Activated CD8-positive, alpha-beta T cell treated with anti-CD3 and anti-CD28 coated beads for 36 hours (primary cell): ENCODE measurements at regions of chr2 and their contacts with region 1.

Region 1: DNA sequence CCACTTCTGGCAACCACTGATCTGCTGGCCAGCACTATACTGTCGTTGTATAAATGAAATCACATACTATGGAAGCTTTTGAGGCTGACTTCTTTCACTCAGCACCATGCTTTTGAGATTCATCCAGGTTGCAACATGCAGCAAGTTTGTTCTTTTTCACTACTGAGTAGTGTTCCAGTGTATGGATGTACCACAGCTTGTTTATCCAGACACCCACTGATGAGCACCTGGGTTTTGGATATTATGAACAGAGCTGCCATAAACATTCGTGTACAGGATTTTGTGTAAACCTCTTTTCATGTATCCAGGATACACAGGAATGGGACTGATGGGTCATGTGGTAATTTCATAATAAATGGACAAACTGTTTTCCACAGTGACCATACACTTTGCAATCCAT is 10.7 kb downstream of the ERCC3 start:
- DNase-seq: no peak
- ATAC-seq: no peak
- H3K4me3 Mint-ChIP-seq: no peak overlapping the region
- H3K27ac Mint-ChIP-seq: no peak overlapping the region
- H3K4me1 Mint-ChIP-seq: peaks cover 27% of the 10 kb centered on the region
- H3K27me3 Mint-ChIP-seq: no peaks in the 10 kb centered on the region
- CTCF ChIP-seq: no peak

Region 2: DNA sequence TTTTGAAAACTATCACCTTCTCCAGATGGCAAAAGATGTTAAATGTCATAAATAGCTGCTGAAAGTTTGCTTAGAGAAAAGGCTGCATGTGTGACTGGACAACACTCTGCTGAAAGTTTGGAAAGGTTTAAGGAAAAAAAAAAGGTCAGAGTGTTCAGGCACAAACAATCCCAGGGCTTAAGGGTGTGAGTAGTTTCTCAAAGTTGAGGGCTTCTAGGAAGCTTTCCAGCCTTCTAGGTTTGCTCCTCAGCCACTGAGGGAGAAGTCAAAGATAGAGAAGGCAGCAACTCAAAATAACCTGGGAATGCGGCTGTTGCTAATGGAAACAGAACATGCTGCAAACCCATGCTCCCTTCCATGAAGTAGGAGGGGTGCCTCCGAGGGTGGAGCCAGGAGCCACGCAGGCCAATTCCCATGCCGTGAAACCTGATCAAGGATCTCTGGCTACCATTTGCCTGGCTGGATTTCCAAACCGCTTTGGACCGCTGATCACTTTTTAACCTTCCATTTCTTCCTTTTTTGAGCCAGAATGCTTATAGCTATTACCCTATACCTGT is 296.6 kb before region 1 on chr2:
- CTCF ChIA-PET with region 1: no interaction called
- POLR2A ChIA-PET with region 1: no interaction called
- intact Hi-C with region 1: no loop called
- DNase-seq: no peak
- ATAC-seq: no peak
- H3K4me3 Mint-ChIP-seq: no peak overlapping the region
- H3K27ac Mint-ChIP-seq: no peak overlapping the region
- H3K4me1 Mint-ChIP-seq: no peaks in the 10 kb centered on the region
- H3K27me3 Mint-ChIP-seq: peaks cover 14% of the 10 kb centered on the region
- CTCF ChIP-seq: no peak

Region 3: GRCh38 chr2:127086990-127087790 is 196.1 kb before region 1 on chr2:
- CTCF ChIA-PET with region 1: no interaction called
- POLR2A ChIA-PET with region 1: no interaction called
- intact Hi-C with region 1: no loop called
- DNase-seq: no peak
- ATAC-seq: no peak
- H3K4me3 Mint-ChIP-seq: no peak overlapping the region
- H3K27ac Mint-ChIP-seq: peak overlapping the region; percentile 32
- H3K4me1 Mint-ChIP-seq: peaks cover 45% of the 10 kb centered on the region
- H3K27me3 Mint-ChIP-seq: no peaks in the 10 kb centered on the region
- CTCF ChIP-seq: no peak

Region 4: DNA sequence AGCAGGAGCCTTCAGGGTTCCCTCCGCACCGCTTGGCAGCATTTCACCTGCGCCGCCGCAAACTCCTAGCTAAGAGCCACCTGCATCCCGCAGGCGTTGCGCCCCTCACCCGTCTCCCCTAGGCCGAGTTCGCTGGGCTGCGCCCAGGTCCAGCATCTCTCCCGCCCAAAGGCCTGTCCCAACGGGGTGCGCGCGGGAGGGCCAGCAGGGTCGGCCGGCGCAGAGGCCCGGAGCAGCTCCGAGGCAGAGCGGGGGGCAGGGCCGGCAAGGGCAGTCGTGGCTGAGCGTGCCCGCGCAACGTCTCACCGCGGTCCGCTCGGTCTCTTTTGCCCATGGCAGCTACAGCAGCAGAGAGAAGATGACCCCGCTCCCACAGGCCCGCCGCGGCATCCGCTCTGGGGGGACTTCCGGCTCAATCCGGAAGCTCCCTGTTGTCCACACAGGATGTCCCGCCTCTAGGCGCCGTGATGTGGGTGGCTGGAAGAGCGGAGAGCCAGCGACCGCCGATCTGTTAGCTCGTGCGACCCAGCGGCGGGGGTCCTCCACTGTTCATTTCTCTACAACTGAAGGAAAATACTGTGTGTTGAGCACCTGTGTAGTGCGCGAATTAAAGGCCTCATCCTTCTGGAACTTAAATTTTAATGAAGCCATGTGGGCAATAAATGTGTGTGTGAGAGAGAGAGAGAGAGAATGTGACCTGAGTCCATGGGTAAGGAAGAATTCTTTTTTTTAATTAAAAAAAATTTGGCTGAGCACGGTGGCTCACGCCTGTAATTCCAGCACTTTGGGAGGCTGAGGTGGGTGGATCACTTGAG is 10.7 kb after region 1 on chr2 and contains the start of gene ERCC3:
- CTCF ChIA-PET with region 1: interaction called, 4 read pairs
- POLR2A ChIA-PET with region 1: interaction called, 13 read pairs
- intact Hi-C with region 1: no loop called
- DNase-seq: peak; percentile 93
- ATAC-seq: peak; percentile 99
- H3K4me3 Mint-ChIP-seq: peak within 1 kb of the TSS; percentile 98
- H3K27ac Mint-ChIP-seq: peak within 1 kb of the TSS; percentile 97
- H3K4me1 Mint-ChIP-seq: peaks cover 26% of the 10 kb centered on the region
- H3K27me3 Mint-ChIP-seq: no peaks in the 10 kb centered on the region
- CTCF ChIP-seq: no peak
- total RNA-seq, gene ERCC3: 43.7 to 43.9 TPM